Uterus (tissue), 4 donors: ENCODE measurements at regions of chr14 and their contacts with region 1.

Region 1: GRCh38 chr14:93115069-93115820 is 480 bp downstream of the ITPK1 start:
- DNase-seq: peak; percentile 84 to 89
- H3K4me3 ChIP-seq: peak overlapping the region; percentile 71 to 81
- H3K27ac ChIP-seq: peak overlapping the region; percentile 96 to 99
- H3K4me1 ChIP-seq: peaks cover 0 to 5% of the 10 kb centered on the region in 2 donors
- H3K27me3 ChIP-seq: no peaks in the 10 kb centered on the region
- CTCF ChIP-seq: peak in 2 of 4 experiments; percentile 34 to 44
- POLR2A ChIP-seq: peak; percentile 28 to 57

Region 2: DNA sequence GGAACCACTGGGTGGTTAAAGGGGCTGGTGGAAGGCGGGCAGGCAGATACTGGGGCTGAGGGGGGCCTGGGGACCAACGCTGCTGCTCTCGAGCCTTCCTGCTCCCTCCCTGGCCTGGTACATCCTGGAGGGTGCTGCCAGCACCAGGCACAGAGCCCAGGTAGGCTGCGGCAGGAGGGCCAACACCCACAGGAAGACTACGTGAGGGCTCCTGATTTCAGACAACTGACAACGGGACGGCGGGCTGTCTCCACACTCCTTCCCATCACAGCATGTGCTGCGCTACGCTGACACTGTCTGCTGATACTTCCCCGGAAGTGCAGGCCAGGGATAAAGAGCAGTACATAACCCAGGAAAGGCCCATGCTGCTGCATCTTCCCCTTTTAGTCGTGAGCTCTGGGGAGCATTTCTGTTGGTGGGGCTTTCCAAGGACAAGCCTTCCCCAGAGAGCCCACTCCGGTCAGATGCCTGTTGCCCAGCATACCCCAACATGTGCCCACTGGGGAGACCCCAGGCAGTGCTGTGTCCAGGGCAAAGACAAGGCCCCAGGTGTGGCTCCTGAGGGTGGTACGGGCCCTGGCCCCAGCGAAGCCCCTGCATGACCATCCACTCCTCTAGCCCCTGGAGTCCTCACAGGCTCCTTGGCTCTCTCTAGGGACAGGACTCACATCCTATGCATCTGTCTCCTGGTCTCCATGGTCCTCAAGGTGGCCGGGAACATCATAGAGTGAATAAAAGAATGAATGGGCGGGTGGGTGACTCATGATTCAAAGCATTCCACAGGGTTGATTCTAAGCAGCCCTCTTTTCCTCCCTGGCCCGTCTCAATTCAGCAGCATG is 154.3 kb before region 1 on chr14:
- intact Hi-C with region 1: loop called (anchors 10 kb)
- DNase-seq: no peak
- H3K4me3 ChIP-seq: no peak overlapping the region
- H3K27ac ChIP-seq: no peak overlapping the region
- H3K4me1 ChIP-seq: no peaks in the 10 kb centered on the region
- H3K27me3 ChIP-seq: no peaks in the 10 kb centered on the region
- CTCF ChIP-seq: no peak
- POLR2A ChIP-seq: no peak